ENCODE measurements at regions of chr5 and their contacts with region 1.

Region 1: GRCh38 chr5:89128906-89129625 is 246.1 kb upstream of the MEF2C start:
- DNase-seq: no peak
- H3K4me3 ChIP-seq: no peak overlapping the region
- H3K27me3 ChIP-seq: no peaks in the 10 kb centered on the region
- CTCF ChIP-seq: no peak

Region 2: DNA sequence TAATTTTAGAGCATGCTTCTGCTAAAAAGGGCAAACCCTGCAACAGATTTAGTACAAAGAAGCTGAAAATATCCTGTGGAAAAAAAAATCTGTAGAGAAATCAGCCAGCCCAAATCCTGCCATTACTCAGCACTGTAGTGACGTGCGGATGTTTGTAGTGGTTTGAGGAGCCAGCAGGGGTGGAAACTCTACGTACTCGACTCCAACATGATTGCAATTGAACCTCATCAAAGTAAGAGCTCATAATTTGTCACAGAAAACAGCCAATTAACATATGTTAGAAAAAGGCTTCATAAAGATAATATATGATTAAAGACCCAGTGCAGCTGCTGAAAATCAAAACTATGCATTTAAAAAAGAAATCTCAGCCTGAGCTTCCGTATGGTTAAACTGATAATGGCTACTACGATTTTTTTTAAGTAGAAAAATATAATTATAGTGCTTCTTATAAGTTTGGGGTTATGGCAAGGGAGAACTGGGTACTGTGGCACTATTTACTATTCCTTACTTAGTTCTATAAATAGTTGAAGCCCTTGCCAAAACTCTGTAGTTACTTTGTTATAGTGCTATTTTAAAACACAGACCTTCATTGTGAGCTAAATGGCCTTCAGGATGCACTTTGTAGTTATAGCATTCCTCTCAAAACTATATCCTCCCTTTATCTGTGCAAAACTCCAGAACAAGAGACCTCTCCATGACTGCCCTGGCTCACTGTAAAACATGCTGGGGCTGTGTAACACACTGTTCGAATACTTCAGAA is 295.5 kb before region 1 on chr5:
- CTCF ChIA-PET with region 1: no interaction called
- POLR2A ChIA-PET with region 1: no interaction called
- DNase-seq: no peak
- H3K4me3 ChIP-seq: no peak overlapping the region
- H3K27me3 ChIP-seq: no peaks in the 10 kb centered on the region
- CTCF ChIP-seq: no peak

Region 3: GRCh38 chr5:88925692-88926490 is 203.2 kb before region 1 on chr5:
- CTCF ChIA-PET with region 1: no interaction called
- POLR2A ChIA-PET with region 1: interaction called, 16 read pairs
- DNase-seq: no peak
- H3K4me3 ChIP-seq: no peak overlapping the region
- H3K27me3 ChIP-seq: no peaks in the 10 kb centered on the region
- CTCF ChIP-seq: no peak

Measured in BJ (cell line).